Calu3 (cell line): ENCODE measurements at regions of chr3 and their contacts with region 1.

Region 1: DNA sequence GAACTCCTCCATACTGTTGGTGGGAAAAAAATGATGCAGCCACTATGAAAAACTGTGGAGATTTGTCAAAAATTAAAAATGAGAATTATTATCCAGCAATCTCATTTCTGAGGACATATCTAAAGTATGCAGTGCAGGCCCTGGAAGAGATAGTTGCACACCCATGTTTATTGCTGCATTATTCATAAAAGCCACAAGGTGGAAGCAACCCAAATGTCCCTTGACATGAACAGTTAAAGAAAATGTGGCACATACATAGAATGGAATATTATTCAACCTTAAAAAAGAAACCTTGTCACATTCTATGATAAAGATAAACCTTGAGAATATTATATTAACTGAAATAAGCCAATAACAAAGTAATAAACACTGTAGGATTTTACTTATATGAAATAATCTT is 80.9 kb upstream of the ARHGEF26 start:
- DNase-seq: peak; percentile 26
- H3K4me3 Mint-ChIP-seq: no peak overlapping the region
- H3K27ac Mint-ChIP-seq: no peak overlapping the region
- H3K4me1 Mint-ChIP-seq: no peaks in the 10 kb centered on the region
- H3K27me3 Mint-ChIP-seq: no peaks in the 10 kb centered on the region
- CTCF ChIP-seq: peak; percentile 69

Region 2: GRCh38 chr3:154081305-154081704 is 41.0 kb after region 1 on chr3:
- CTCF ChIA-PET with region 1: no interaction called
- intact Hi-C with region 1: loop called (anchors 5 kb)
- DNase-seq: no peak
- H3K4me3 Mint-ChIP-seq: no peak overlapping the region
- H3K27ac Mint-ChIP-seq: no peak overlapping the region
- H3K4me1 Mint-ChIP-seq: peaks cover 14% of the 10 kb centered on the region
- H3K27me3 Mint-ChIP-seq: no peaks in the 10 kb centered on the region
- CTCF ChIP-seq: no peak

Region 3: DNA sequence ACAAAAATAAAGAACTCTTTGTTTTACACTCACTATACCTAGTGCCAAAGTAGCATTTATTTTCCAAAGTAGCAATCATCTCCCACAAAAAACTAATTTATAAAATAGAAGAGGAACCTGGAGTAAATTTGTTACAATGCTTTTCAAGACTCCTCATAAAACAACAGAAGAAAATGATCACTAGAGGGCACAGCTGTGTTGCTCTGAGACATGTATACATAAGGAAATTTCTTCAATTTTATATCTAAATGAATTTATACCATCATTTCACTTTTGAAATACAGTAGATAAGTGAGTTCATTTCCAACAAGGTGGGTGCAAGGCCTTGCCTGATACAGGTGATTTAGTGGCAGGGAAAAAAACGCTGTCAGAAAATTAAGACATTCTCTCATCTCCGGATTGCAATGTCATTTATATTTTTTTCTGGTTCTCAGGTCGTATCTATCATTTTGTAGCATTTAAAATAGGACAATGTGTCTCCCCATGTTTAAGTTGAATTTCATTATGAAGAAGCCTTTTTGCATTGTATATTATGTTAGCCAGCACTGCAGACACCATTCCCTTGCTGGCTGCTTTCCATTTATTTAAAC is 55.6 kb after region 1 on chr3:
- CTCF ChIA-PET with region 1: no interaction called
- intact Hi-C with region 1: loop called (anchors 2 kb)
- DNase-seq: no peak
- H3K4me3 Mint-ChIP-seq: no peak overlapping the region
- H3K27ac Mint-ChIP-seq: no peak overlapping the region
- H3K4me1 Mint-ChIP-seq: no peaks in the 10 kb centered on the region
- H3K27me3 Mint-ChIP-seq: no peaks in the 10 kb centered on the region
- CTCF ChIP-seq: peak; percentile 66

Region 4: DNA sequence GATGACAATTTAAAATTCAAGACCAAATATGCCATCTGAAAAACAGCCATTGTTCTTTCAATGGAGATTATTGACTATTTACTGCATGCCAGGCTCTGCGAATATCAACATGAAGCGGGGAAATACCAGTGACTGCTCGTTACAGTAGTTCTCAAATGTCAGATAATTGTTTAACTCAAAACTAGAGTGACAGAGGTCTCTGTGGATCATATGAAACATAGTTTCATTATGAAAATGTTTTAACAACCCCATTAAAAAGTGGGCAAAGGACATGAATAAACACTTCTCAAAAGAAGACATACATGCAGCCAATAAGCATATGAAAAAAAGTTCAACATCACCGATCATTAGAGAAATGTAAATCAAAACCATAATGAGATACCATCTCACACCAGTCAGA is 439.7 kb after region 1 on chr3:
- CTCF ChIA-PET with region 1: no interaction called
- intact Hi-C with region 1: no loop called
- DNase-seq: no peak
- H3K4me3 Mint-ChIP-seq: no peak overlapping the region
- H3K27ac Mint-ChIP-seq: no peak overlapping the region
- H3K4me1 Mint-ChIP-seq: no peaks in the 10 kb centered on the region
- H3K27me3 Mint-ChIP-seq: no peaks in the 10 kb centered on the region
- CTCF ChIP-seq: no peak

Region 5: GRCh38 chr3:155158393-155159037 is 1118.2 kb after region 1 on chr3:
- CTCF ChIA-PET with region 1: no interaction called
- intact Hi-C with region 1: no loop called
- DNase-seq: no peak
- H3K4me3 Mint-ChIP-seq: no peak overlapping the region
- H3K27ac Mint-ChIP-seq: no peak overlapping the region
- H3K4me1 Mint-ChIP-seq: peaks cover 8% of the 10 kb centered on the region
- H3K27me3 Mint-ChIP-seq: no peaks in the 10 kb centered on the region
- CTCF ChIP-seq: no peak